ENCODE measurements at regions of chr7 and their contacts with region 1.

Region 1: GRCh38 chr7:28643589-28644340 is 231.4 kb downstream of the CREB5 start:
- DNase-seq: no peak
- ATAC-seq: no peak
- H3K4me3 ChIP-seq: no peak overlapping the region
- H3K27ac ChIP-seq: no peak overlapping the region
- H3K4me1 ChIP-seq: peaks cover 15% of the 10 kb centered on the region
- H3K27me3 ChIP-seq: no peaks in the 10 kb centered on the region
- CTCF ChIP-seq: no peak

Region 2: GRCh38 chr7:28037220-28038010 is 606.4 kb before region 1 on chr7:
- CTCF ChIA-PET with region 1: no interaction called
- POLR2A ChIA-PET with region 1: no interaction called
- intact Hi-C with region 1: no loop called
- DNase-seq: peak; percentile 96
- ATAC-seq: peak; percentile 76
- H3K4me3 ChIP-seq: peak overlapping the region; percentile 57
- H3K27ac ChIP-seq: peak overlapping the region; percentile 90
- H3K4me1 ChIP-seq: peaks cover 70% of the 10 kb centered on the region
- H3K27me3 ChIP-seq: no peaks in the 10 kb centered on the region
- CTCF ChIP-seq: no peak

Region 3: DNA sequence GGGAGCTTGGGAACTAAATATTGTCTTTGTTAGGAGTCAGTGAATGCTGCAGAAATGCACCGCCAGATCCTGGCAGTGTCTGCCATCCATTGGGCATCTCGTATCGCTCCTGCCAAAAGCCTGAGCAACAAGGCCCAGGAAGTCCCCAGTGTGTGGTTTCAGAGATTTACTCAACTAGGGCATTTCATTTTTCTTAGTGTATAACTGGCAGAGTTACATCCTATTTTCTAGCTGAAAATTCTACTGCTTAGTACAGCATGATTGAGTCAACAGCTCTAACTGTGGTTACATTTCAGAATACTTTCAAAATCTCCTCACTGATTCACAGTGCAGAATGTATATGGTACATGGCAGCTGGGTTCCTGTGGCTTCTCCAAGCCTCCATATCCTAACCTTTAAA is 327.3 kb before region 1 on chr7:
- CTCF ChIA-PET with region 1: no interaction called
- POLR2A ChIA-PET with region 1: no interaction called
- intact Hi-C with region 1: no loop called
- DNase-seq: no peak
- ATAC-seq: no peak
- H3K4me3 ChIP-seq: no peak overlapping the region
- H3K27ac ChIP-seq: no peak overlapping the region
- H3K4me1 ChIP-seq: peaks cover 21% of the 10 kb centered on the region
- H3K27me3 ChIP-seq: no peaks in the 10 kb centered on the region
- CTCF ChIP-seq: no peak

Region 4: GRCh38 chr7:28456044-28456443 is 187.7 kb before region 1 on chr7:
- CTCF ChIA-PET with region 1: no interaction called
- POLR2A ChIA-PET with region 1: no interaction called
- intact Hi-C with region 1: no loop called
- DNase-seq: no peak
- ATAC-seq: no peak
- H3K4me3 ChIP-seq: no peak overlapping the region
- H3K27ac ChIP-seq: no peak overlapping the region
- H3K4me1 ChIP-seq: no peaks in the 10 kb centered on the region
- H3K27me3 ChIP-seq: no peaks in the 10 kb centered on the region
- CTCF ChIP-seq: no peak

Region 5: DNA sequence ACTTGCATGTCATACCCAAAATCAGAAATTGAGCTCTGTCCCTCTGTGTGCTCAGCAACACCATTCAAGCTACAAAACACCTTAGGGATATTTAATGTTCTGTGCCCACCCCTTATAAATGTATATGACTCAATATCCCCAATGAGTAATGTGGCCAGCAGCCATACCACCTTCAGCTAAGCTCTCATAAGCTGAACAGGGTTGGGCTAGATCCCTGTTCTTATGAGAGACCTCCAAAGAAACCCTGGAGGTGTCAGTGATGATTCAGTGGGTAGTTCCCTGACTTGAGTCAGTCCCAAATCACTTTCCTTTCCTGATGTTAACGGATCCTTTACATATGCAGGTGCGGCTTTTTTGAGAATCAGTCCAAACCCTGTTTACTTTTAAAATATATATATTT is 22.4 kb after region 1 on chr7:
- CTCF ChIA-PET with region 1: no interaction called
- POLR2A ChIA-PET with region 1: interaction called, 3 read pairs
- intact Hi-C with region 1: loop called (anchors 1 kb)
- DNase-seq: peak; percentile 95
- ATAC-seq: peak; percentile 96
- H3K4me3 ChIP-seq: no peak overlapping the region
- H3K27ac ChIP-seq: peak overlapping the region; percentile 76
- H3K4me1 ChIP-seq: peaks cover 28% of the 10 kb centered on the region
- H3K27me3 ChIP-seq: no peaks in the 10 kb centered on the region
- CTCF ChIP-seq: no peak